ENCODE measurements at regions of chr1 and their contacts with region 1.

Region 1: GRCh38 chr1:116737020-116737854 is 17.0 kb upstream of the CD2 start:
- DNase-seq: peak; percentile 56
- H3K4me3 ChIP-seq: no peak overlapping the region
- H3K27ac ChIP-seq: no peak overlapping the region
- H3K27me3 ChIP-seq: no peaks in the 10 kb centered on the region
- CTCF ChIP-seq: peak; percentile 88

Region 2: DNA sequence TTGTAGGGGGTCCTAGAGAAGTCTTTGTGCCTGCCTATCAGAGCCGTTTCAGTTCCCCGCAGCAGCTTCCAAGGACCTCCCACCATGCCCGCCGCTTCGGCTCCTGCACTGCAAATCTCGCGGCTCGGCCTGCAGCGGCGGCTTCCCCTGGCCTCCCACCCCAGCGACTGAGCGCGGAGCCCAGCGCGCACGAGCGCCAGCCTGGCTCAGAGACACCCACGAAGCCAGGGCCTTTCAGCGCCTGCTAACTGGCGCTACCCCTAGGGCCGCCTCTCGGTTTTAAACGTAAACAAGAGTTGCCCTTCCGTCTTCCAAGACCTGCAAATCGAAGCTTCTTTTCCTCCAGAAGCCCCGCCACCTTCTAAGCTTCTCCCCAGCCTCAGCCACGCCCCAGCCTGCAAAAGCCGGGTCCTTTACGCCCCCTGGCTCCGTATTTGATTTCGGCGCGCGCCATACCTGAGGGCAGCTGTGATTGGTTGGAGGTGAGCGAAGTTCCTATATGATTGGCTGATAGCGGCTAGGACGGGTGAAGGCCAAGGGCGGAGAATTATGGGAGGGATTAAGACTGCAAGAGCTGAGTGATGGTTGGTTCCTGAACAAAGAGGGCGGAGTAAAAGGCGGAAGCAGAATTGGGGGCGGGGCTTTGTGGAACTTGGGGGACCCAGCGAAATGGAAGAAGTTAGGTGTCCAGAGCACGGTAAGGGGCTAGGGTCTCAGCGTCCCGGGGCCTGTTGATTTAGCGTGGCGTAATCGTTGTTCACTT is 322.6 kb after region 1 on chr1 and contains the start of gene TTF2:
- in situ Hi-C with region 1: loop called (anchors 25 kb)
- DNase-seq: peak; percentile 99
- H3K4me3 ChIP-seq: peak within 1 kb of the TSS; percentile 85
- H3K27ac ChIP-seq: peak within 1 kb of the TSS; percentile 75
- H3K27me3 ChIP-seq: no peaks in the 10 kb centered on the region
- CTCF ChIP-seq: peak; percentile 39